Naive thymus-derived CD4-positive, alpha-beta T cell (primary cell): ENCODE measurements at regions of chr20 and their contacts with region 1.

Region 1: GRCh38 chr20:57391074-57391554 is at the start of gene RBM38:
- DNase-seq: peak; percentile 64 to 89 (median 71)
- ATAC-seq: peak; percentile 83
- H3K4me3 ChIP-seq: peak within 1 kb of the TSS; percentile 99
- H3K4me3 Mint-ChIP-seq: peak within 1 kb of the TSS; percentile 90 to 99 (median 98)
- H3K27ac ChIP-seq: peak within 1 kb of the TSS; percentile 83
- H3K27ac Mint-ChIP-seq: peak within 1 kb of the TSS; percentile 92 to 100 (median 99)
- H3K4me1 ChIP-seq: peaks cover 45 to 47% of the 10 kb centered on the region in 2 donors
- H3K4me1 Mint-ChIP-seq: peaks cover 36 to 54% (median 45%) of the 10 kb centered on the region in 7 donors
- H3K27me3 ChIP-seq: no peaks in the 10 kb centered on the region
- H3K27me3 Mint-ChIP-seq: no peaks in the 10 kb centered on the region
- total RNA-seq, gene RBM38: 70.6 to 260 (median 127) TPM

Region 2: GRCh38 chr20:57263801-57264792 is 127.0 kb before region 1 on chr20:
- CTCF ChIA-PET with region 1: no interaction called
- POLR2A ChIA-PET with region 1: no interaction called
- intact Hi-C with region 1: no loop called
- DNase-seq: no peak
- ATAC-seq: no peak
- H3K4me3 ChIP-seq: no peak overlapping the region
- H3K4me3 Mint-ChIP-seq: no peak overlapping the region
- H3K27ac ChIP-seq: no peak overlapping the region
- H3K27ac Mint-ChIP-seq: no peak overlapping the region
- H3K4me1 ChIP-seq: no peaks in the 10 kb centered on the region
- H3K4me1 Mint-ChIP-seq: peaks cover 0 to 13% (median 5%) of the 10 kb centered on the region in 7 donors
- H3K27me3 ChIP-seq: no peaks in the 10 kb centered on the region
- H3K27me3 Mint-ChIP-seq: peaks cover 64 to 91% (median 75%) of the 10 kb centered on the region in 5 donors

Region 3: DNA sequence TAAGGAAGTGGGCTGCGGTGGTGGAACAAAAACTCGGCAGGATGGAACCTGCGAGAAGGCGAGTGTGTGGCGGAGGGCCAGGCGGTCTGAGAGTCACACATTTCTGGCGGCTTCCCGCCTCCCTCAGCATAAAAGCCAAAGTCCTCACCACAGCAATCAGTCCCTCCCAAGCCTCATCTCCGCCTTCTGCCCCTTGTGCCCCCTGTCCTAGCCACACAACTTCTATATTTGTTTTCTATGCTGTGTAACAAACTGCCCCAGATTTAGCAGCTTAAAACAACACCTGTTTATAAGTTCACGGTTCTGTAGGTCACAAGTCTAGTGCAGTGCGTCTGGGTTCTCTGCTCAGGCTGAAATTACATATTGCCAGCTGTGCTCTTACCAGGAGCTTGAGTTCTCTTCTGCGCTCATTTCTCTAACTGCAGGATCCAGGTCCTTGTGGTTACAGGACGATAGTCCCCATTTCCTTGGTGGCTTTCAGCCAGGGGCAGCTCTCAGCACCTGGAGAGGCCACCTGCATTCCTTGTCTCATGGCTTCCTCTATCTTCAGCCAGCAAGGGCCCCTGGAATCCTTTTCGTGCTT is 73.2 kb before region 1 on chr20:
- CTCF ChIA-PET with region 1: no interaction called
- POLR2A ChIA-PET with region 1: no interaction called
- intact Hi-C with region 1: no loop called
- DNase-seq: no peak
- ATAC-seq: peak; percentile 8
- H3K4me3 ChIP-seq: no peak overlapping the region
- H3K4me3 Mint-ChIP-seq: no peak overlapping the region
- H3K27ac ChIP-seq: no peak overlapping the region
- H3K27ac Mint-ChIP-seq: no peak overlapping the region
- H3K4me1 ChIP-seq: no peaks in the 10 kb centered on the region
- H3K4me1 Mint-ChIP-seq: peaks cover 0 to 2% (median 0%) of the 10 kb centered on the region in 7 donors
- H3K27me3 ChIP-seq: peaks cover 0 to 6% of the 10 kb centered on the region in 2 donors
- H3K27me3 Mint-ChIP-seq: peaks cover 28 to 43% (median 39%) of the 10 kb centered on the region in 5 donors

Region 4: GRCh38 chr20:57335392-57335791 is 55.7 kb before region 1 on chr20:
- CTCF ChIA-PET with region 1: no interaction called
- POLR2A ChIA-PET with region 1: no interaction called
- intact Hi-C with region 1: no loop called
- DNase-seq: no peak
- ATAC-seq: no peak
- H3K4me3 ChIP-seq: no peak overlapping the region
- H3K4me3 Mint-ChIP-seq: no peak overlapping the region
- H3K27ac ChIP-seq: no peak overlapping the region
- H3K27ac Mint-ChIP-seq: no peak overlapping the region
- H3K4me1 ChIP-seq: no peaks in the 10 kb centered on the region
- H3K4me1 Mint-ChIP-seq: no peaks in the 10 kb centered on the region
- H3K27me3 ChIP-seq: no peaks in the 10 kb centered on the region
- H3K27me3 Mint-ChIP-seq: peaks cover 29 to 46% (median 38%) of the 10 kb centered on the region in 5 donors

Region 5: GRCh38 chr20:57351042-57351783 is 39.9 kb before region 1 on chr20 and contains the start of gene RAE1:
- CTCF ChIA-PET with region 1: no interaction called
- POLR2A ChIA-PET with region 1: interaction called, 9 read pairs
- intact Hi-C with region 1: loop called (anchors 1 kb)
- DNase-seq: peak; percentile 81 to 92 (median 89)
- ATAC-seq: peak; percentile 88
- H3K4me3 ChIP-seq: peak within 1 kb of the TSS; percentile 81
- H3K4me3 Mint-ChIP-seq: peak within 1 kb of the TSS; percentile 89 to 97 (median 92)
- H3K27ac ChIP-seq: peak within 1 kb of the TSS; percentile 90
- H3K27ac Mint-ChIP-seq: peak within 1 kb of the TSS; percentile 81 to 93 (median 90)
- H3K4me1 ChIP-seq: peaks cover 0 to 19% of the 10 kb centered on the region in 2 donors
- H3K4me1 Mint-ChIP-seq: peaks cover 14 to 46% (median 29%) of the 10 kb centered on the region in 7 donors
- H3K27me3 ChIP-seq: no peaks in the 10 kb centered on the region
- H3K27me3 Mint-ChIP-seq: peaks cover 0 to 14% (median 0%) of the 10 kb centered on the region in 5 donors
- total RNA-seq, gene RAE1: 31.0 to 41.3 (median 35.2) TPM

Region 6: GRCh38 chr20:57414867-57415592 is 23.9 kb after region 1 on chr20:
- CTCF ChIA-PET with region 1: interaction called, 5 read pairs
- POLR2A ChIA-PET with region 1: interaction called, 16 read pairs
- intact Hi-C with region 1: no loop called
- DNase-seq: no peak
- ATAC-seq: peak; percentile 38
- H3K4me3 ChIP-seq: no peak overlapping the region
- H3K4me3 Mint-ChIP-seq: no peak overlapping the region
- H3K27ac ChIP-seq: no peak overlapping the region
- H3K27ac Mint-ChIP-seq: peak overlapping the region in 1 of 9 donors; percentile 60
- H3K4me1 ChIP-seq: peaks cover 0 to 3% of the 10 kb centered on the region in 2 donors
- H3K4me1 Mint-ChIP-seq: peaks cover 13 to 33% (median 25%) of the 10 kb centered on the region in 7 donors
- H3K27me3 ChIP-seq: no peaks in the 10 kb centered on the region
- H3K27me3 Mint-ChIP-seq: peaks cover 0 to 9% (median 0%) of the 10 kb centered on the region in 5 donors

Region 7: GRCh38 chr20:57473246-57474048 is 82.3 kb after region 1 on chr20:
- CTCF ChIA-PET with region 1: no interaction called
- POLR2A ChIA-PET with region 1: interaction called, 10 read pairs
- intact Hi-C with region 1: no loop called
- DNase-seq: no peak
- ATAC-seq: peak; percentile 82
- H3K4me3 ChIP-seq: no peak overlapping the region
- H3K4me3 Mint-ChIP-seq: peak overlapping the region in 8 of 10 donors; percentile 1 to 66 (median 18)
- H3K27ac ChIP-seq: no peak overlapping the region
- H3K27ac Mint-ChIP-seq: peak overlapping the region; percentile 32 to 83 (median 69)
- H3K4me1 ChIP-seq: peaks cover 14 to 30% of the 10 kb centered on the region in 2 donors
- H3K4me1 Mint-ChIP-seq: peaks cover 7 to 43% (median 31%) of the 10 kb centered on the region in 7 donors
- H3K27me3 ChIP-seq: no peaks in the 10 kb centered on the region
- H3K27me3 Mint-ChIP-seq: peaks cover 0 to 9% (median 0%) of the 10 kb centered on the region in 5 donors

Region 8: DNA sequence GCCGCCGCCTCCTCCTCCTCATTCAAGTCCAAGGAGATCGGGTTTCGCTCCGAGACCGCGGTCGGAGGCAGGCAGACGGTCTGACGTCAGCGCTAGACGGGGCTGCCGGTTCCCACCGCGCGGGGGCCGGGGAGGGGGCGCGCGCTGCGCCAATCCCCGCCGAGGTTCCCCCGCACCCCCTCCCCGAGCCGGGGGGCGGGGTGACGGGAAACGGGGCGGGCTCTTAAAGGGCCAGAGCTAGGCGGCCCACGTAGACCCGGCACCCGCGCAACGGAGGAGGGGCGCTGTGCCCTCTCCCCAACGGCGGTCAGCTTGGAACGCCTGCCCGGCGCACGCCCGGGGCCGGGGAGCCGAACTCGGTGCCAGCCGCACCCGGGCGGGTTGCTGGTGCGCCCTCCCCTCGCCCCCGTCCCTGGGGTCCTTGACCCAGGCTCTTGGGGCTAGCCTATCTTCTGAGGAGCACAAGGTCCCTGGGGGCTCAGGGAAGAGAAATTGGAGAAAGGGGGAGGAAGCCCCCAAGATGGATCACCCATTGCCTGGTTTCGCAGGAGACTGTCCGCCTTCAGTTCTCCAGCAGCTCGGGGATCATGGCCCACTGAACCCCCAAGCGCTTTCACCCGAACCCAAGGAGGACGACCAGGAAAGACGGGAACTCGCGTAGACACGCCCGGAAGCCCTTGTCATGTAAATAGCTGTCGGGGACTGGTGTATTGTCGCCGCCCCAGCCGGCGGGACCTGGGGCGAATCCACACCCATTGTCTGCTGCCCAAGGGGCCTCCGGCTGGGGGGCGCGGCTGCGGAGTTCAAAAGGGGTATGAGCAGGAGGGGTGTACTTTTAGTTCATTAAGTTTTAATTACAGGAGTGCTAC is 319.1 kb after region 1 on chr20 and contains the start of gene PMEPA1:
- CTCF ChIA-PET with region 1: no interaction called
- POLR2A ChIA-PET with region 1: interaction called, 3 read pairs
- intact Hi-C with region 1: loop called in 1 of 2 experiments (anchors 2 kb)
- DNase-seq: peak; percentile 91 to 95 (median 93)
- ATAC-seq: peak; percentile 96
- H3K4me3 ChIP-seq: peak within 1 kb of the TSS; percentile 98
- H3K4me3 Mint-ChIP-seq: peak within 1 kb of the TSS; percentile 82 to 97 (median 94)
- H3K27ac ChIP-seq: peak within 1 kb of the TSS; percentile 88
- H3K27ac Mint-ChIP-seq: peak within 1 kb of the TSS; percentile 46 to 97 (median 95)
- H3K4me1 ChIP-seq: peaks cover 11 to 23% of the 10 kb centered on the region in 2 donors
- H3K4me1 Mint-ChIP-seq: peaks cover 15 to 55% (median 44%) of the 10 kb centered on the region in 7 donors
- H3K27me3 ChIP-seq: peaks cover 0 to 7% of the 10 kb centered on the region in 2 donors
- H3K27me3 Mint-ChIP-seq: peaks cover 0 to 51% (median 0%) of the 10 kb centered on the region in 5 donors
- total RNA-seq, gene PMEPA1: 0.44 to 10.0 (median 9.0) TPM